PC-3 (cell line): ENCODE measurements at regions of chr18 and their contacts with region 1.

Region 1: GRCh38 chr18:3305933-3306332 is 44.0 kb downstream of the MYL12B start:
- DNase-seq: no peak
- ATAC-seq: 0 out of 2 replicates have a peak, but pooled peaks have one; percentile 4
- H3K4me3 ChIP-seq: no peak overlapping the region
- H3K27ac ChIP-seq: peak overlapping the region; percentile 57
- H3K4me1 ChIP-seq: peaks cover 16% of the 10 kb centered on the region
- H3K27me3 ChIP-seq: no peaks in the 10 kb centered on the region
- CTCF ChIP-seq: no peak

Region 2: GRCh38 chr18:3340015-3340681 is 34.2 kb after region 1 on chr18:
- CTCF ChIA-PET with region 1: no interaction called
- POLR2A ChIA-PET with region 1: interaction called, 11 read pairs
- intact Hi-C with region 1: no loop called
- DNase-seq: peak; percentile 71
- ATAC-seq: peak; percentile 72; the same call in 1 of the 2 replicates
- H3K4me3 ChIP-seq: no peak overlapping the region
- H3K27ac ChIP-seq: peak overlapping the region; percentile 55
- H3K4me1 ChIP-seq: peaks cover 8% of the 10 kb centered on the region
- H3K27me3 ChIP-seq: no peaks in the 10 kb centered on the region
- CTCF ChIP-seq: no peak